CD8-positive, alpha-beta memory T cell (primary cell): ENCODE measurements at regions of chr14 and their contacts with region 1.

Region 1: GRCh38 chr14:91829482-91829881 is 37.9 kb downstream of the TC2N start:
- DNase-seq: no peak
- H3K4me3 ChIP-seq: no peak overlapping the region
- H3K4me3 Mint-ChIP-seq: peak overlapping the region in 4 of 7 donors; percentile 0 to 5 (median 0)
- H3K27ac ChIP-seq: no peak overlapping the region
- H3K27ac Mint-ChIP-seq: peak overlapping the region in 7 of 8 donors; percentile 3 to 97 (median 61)
- H3K4me1 ChIP-seq: peaks cover 35% of the 10 kb centered on the region
- H3K4me1 Mint-ChIP-seq: peaks cover 68 to 92% (median 79%) of the 10 kb centered on the region in 3 donors
- H3K27me3 ChIP-seq: no peaks in the 10 kb centered on the region
- H3K27me3 Mint-ChIP-seq: no peaks in the 10 kb centered on the region

Region 2: DNA sequence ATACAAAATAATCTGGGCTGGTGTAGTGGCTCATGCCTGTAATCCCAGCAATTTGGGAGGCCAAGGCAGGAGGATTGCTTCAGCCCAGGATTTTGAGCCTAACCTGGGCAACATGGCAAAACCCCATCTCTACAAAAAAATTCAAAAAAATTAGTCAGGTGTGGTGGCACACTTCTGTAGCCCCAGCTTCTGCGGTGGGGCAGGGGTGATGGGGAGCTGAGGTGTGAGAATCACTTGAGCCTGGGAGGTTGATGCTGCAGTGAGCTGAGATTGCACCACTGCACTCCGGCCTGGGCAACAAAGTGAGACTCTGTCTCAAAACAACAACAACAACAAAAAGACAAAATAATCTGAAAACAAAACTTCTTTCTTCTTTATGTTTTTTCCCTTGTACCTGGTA is 28.1 kb before region 1 on chr14:
- CTCF ChIA-PET with region 1: interaction called, 3 read pairs
- POLR2A ChIA-PET with region 1: interaction called, 13 read pairs
- DNase-seq: peak in 2 of 5 donors; percentile 7 to 15
- H3K4me3 ChIP-seq: no peak overlapping the region
- H3K4me3 Mint-ChIP-seq: peak overlapping the region in 3 of 7 donors; percentile 19 to 62 (median 34)
- H3K27ac ChIP-seq: no peak overlapping the region
- H3K27ac Mint-ChIP-seq: peak overlapping the region in 6 of 8 donors; percentile 15 to 90 (median 66)
- H3K4me1 ChIP-seq: peaks cover 11% of the 10 kb centered on the region
- H3K4me1 Mint-ChIP-seq: peaks cover 36 to 51% (median 46%) of the 10 kb centered on the region in 3 donors
- H3K27me3 ChIP-seq: no peaks in the 10 kb centered on the region
- H3K27me3 Mint-ChIP-seq: no peaks in the 10 kb centered on the region